ENCODE measurements at regions of chr1 and their contacts with region 1.

Region 1: DNA sequence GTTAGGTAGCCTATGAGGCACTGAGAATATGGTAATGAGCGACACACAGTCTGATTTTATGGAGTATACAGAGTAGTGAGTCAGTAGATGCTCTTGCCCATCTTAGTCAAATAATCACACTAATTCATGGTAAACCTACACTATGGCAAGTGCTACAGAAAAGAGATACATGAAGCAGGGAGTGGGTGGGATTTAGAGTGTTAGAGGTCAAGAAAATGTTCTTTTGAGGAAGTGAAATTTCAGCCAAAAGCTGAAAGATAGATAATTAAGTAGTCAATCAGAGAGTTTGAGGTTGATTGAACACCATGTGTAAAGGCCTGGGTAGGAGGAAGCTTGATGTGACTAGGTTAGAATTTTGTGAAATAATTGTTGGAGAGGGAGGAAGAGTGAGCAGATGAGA is 14.7 kb downstream of the MDM4 start:
- DNase-seq: no peak
- ATAC-seq: no peak
- H3K4me3 ChIP-seq: no peak overlapping the region
- H3K27ac ChIP-seq: no peak overlapping the region
- H3K4me1 ChIP-seq: peaks cover 0 to 4% of the 10 kb centered on the region in 2 experiments; a peak in 1 of 5 replicates
- H3K27me3 ChIP-seq: no peaks in the 10 kb centered on the region
- CTCF ChIP-seq: no peak
- EP300 ChIP-seq: no peak
- POLR2A ChIP-seq: no peak
- RAD21 ChIP-seq: no peak

Region 2: DNA sequence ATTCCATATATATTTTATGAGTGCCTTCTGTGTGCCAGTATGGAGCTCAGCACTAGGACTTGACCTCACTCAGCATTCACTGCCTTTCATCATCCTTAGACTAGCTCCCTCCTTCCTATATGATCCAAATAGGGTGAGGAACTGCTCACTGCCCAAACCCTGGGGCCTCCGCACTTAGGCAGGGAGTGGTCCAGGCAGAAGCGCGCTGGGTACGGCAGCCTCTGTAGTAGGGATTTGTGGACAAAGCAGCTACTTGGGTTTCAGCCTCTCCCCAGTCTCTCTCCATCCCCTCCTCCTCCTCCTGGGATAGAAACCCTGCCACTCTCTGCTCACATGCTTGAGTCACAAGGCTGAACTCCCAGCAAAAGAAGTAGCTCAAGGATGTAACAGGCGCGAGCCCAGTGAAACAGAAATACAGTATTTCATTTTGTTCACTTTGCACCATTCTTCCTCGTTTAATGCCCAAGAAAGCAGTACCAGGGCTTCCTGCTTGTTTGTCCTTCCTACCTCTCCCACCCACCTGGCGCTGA is 204.1 kb before region 1 on chr1:
- CTCF ChIA-PET with region 1: no interaction called
- POLR2A ChIA-PET with region 1: no interaction called
- in situ Hi-C with region 1: no loop called
- intact Hi-C with region 1: no loop called
- DNase-seq: no peak
- ATAC-seq: no peak
- H3K4me3 ChIP-seq: no peak overlapping the region
- H3K27ac ChIP-seq: no peak overlapping the region
- H3K4me1 ChIP-seq: no peaks in the 10 kb centered on the region
- H3K27me3 ChIP-seq: peaks cover 22 to 62% of the 10 kb centered on the region in 2 experiments
- CTCF ChIP-seq: no peak
- EP300 ChIP-seq: no peak
- POLR2A ChIP-seq: no peak
- RAD21 ChIP-seq: no peak

Region 3: DNA sequence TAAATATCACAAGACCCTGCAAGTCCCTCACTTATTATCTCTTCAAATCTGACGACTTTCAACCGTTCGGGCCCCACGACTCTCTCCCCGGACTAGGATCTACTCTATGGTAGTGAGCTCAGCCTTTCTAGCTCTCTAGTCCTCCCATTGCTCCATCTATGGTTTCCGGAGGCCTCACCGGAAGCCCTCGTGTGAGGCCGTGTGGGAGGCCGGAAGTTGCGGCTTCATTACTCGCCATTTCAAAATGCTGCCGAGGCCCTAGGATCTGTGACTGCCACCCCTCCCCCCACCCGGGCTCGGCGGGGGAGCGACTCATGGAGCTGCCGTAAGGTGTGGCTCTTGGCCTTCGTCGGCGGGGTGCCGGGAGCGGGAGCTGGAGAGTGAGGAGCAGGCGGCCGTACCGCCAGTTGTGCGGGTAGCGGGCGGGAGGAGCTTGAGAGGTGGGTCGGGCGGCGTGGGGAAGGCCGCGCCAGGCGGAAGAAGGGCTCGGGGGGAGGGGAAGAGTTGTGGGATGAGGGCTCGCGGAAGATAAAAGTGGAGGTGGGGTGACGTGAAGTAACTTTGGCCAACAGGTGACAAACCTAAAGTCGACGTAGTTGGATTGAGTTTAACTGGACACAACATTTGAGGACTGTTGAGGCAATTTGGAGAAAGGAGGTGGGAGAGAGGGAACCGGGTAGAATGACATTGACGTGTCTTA is 14.6 kb before region 1 on chr1 and contains the start of gene MDM4:
- CTCF ChIA-PET with region 1: no interaction called
- POLR2A ChIA-PET with region 1: interaction called, 91 read pairs
- in situ Hi-C with region 1: no loop called
- intact Hi-C with region 1: no loop called
- DNase-seq: peak; percentile 94 to 99 (median 95)
- ATAC-seq: peak; percentile 95
- H3K4me3 ChIP-seq: peak within 1 kb of the TSS; percentile 75
- H3K27ac ChIP-seq: peak within 1 kb of the TSS; percentile 98
- H3K4me1 ChIP-seq: peaks cover 34 to 43% of the 10 kb centered on the region in 2 experiments
- H3K27me3 ChIP-seq: no peaks in the 10 kb centered on the region
- CTCF ChIP-seq: no peak
- EP300 ChIP-seq: peak; percentile 83
- POLR2A ChIP-seq: peak; percentile 98
- RAD21 ChIP-seq: no peak
- polyA plus RNA-seq, gene MDM4: 3.3 to 11.1 TPM

Region 4: DNA sequence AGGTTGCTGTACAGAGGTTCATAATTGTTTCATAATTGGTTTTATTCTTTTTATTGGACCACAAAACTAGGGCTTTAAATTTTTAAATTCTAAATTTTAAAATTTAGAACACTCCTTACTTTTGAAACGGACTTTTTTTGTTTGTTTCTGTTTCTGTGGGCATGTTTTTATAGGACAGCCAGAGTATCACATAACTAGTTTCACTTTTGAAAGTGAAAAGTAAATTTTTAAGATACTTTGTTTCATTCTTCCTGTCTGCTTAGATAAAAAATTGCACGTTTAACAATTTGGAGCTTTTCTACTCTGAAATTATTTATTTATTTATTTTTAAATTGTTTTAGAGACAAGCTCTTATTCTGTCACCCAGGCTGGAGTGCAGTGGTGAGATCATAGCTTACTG is 14.9 kb after region 1 on chr1:
- CTCF ChIA-PET with region 1: no interaction called
- POLR2A ChIA-PET with region 1: interaction called, 11 read pairs
- in situ Hi-C with region 1: no loop called
- intact Hi-C with region 1: no loop called
- DNase-seq: no peak
- ATAC-seq: no peak
- H3K4me3 ChIP-seq: no peak overlapping the region
- H3K27ac ChIP-seq: no peak overlapping the region
- H3K4me1 ChIP-seq: no peaks in the 10 kb centered on the region
- H3K27me3 ChIP-seq: no peaks in the 10 kb centered on the region
- CTCF ChIP-seq: no peak
- EP300 ChIP-seq: no peak
- POLR2A ChIP-seq: no peak
- RAD21 ChIP-seq: no peak